ENCODE measurements at regions of chr16 and their contacts with region 1.

Region 1: GRCh38 chr16:22898874-22899348 is 84.9 kb downstream of the HS3ST2 start:
- DNase-seq: peak; percentile 33 to 73
- ATAC-seq: peak; percentile 73 to 83
- H3K4me3 ChIP-seq: no peak overlapping the region
- H3K27ac ChIP-seq: no peak overlapping the region
- H3K4me1 ChIP-seq: no peaks in the 10 kb centered on the region
- CTCF ChIP-seq: peak; percentile 71
- EP300 ChIP-seq: no peak
- POLR2A ChIP-seq: no peak
- RAD21 ChIP-seq: peak; percentile 69 to 84

Region 2: DNA sequence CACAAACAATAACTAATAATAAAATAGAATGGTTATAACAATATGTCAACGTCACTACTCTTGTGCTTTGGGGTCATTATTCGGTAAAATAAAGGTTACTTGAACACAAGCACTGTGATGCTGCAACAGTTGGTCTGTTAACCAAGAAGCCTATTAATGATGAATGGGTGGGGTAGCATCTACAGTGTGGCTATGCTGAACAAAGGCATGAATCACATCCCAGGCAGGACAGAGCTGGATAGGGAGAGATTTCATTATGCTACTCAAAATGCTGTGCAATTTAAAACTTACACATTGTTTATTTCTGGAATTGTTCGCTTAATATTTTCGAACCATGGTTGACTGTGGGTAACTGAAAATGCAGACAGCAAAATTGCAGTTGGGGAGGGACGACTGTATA is 94.0 kb before region 1 on chr16:
- CTCF ChIA-PET with region 1: no interaction called
- POLR2A ChIA-PET with region 1: no interaction called
- DNase-seq: no peak
- ATAC-seq: no peak
- H3K4me3 ChIP-seq: no peak overlapping the region
- H3K27ac ChIP-seq: no peak overlapping the region
- H3K4me1 ChIP-seq: no peaks in the 10 kb centered on the region
- CTCF ChIP-seq: no peak
- EP300 ChIP-seq: no peak
- POLR2A ChIP-seq: no peak
- RAD21 ChIP-seq: no peak

Region 3: GRCh38 chr16:22843856-22844255 is 55.1 kb before region 1 on chr16:
- CTCF ChIA-PET with region 1: no interaction called
- POLR2A ChIA-PET with region 1: no interaction called
- DNase-seq: no peak
- ATAC-seq: no peak
- H3K4me3 ChIP-seq: no peak overlapping the region
- H3K27ac ChIP-seq: no peak overlapping the region
- H3K4me1 ChIP-seq: no peaks in the 10 kb centered on the region
- CTCF ChIP-seq: no peak
- EP300 ChIP-seq: no peak
- POLR2A ChIP-seq: no peak
- RAD21 ChIP-seq: no peak

Region 4: DNA sequence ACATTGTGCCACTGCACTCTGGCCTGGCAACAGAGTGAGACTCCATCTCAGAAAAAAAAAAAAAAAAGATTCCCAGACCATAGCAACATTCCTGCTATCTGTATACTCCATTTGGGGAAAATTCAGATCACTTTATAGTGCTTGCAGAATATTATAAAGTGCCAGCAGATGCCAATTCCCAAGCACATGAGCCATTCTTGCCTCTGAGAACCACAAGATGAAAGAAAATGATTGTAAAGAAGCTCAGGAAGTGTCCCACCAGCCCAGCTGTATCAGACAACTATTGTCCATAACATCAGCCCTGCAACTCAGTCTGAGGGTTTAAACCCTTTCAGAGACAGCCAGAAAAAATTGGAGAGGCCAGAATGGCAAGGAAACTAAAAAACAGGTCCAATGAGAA is 15.9 kb before region 1 on chr16:
- CTCF ChIA-PET with region 1: interaction called, 19 read pairs
- POLR2A ChIA-PET with region 1: no interaction called
- DNase-seq: no peak
- ATAC-seq: no peak
- H3K4me3 ChIP-seq: no peak overlapping the region
- H3K27ac ChIP-seq: no peak overlapping the region
- H3K4me1 ChIP-seq: no peaks in the 10 kb centered on the region
- CTCF ChIP-seq: no peak
- EP300 ChIP-seq: no peak
- POLR2A ChIP-seq: no peak
- RAD21 ChIP-seq: no peak

Region 5: GRCh38 chr16:22912654-22913053 is 13.7 kb after region 1 on chr16:
- CTCF ChIA-PET with region 1: interaction called, 10 read pairs
- POLR2A ChIA-PET with region 1: no interaction called
- DNase-seq: no peak
- ATAC-seq: no peak
- H3K4me3 ChIP-seq: no peak overlapping the region
- H3K27ac ChIP-seq: no peak overlapping the region
- H3K4me1 ChIP-seq: no peaks in the 10 kb centered on the region
- CTCF ChIP-seq: no peak
- EP300 ChIP-seq: no peak
- POLR2A ChIP-seq: no peak
- RAD21 ChIP-seq: no peak

Region 6: GRCh38 chr16:23060458-23061320 is 161.8 kb after region 1 on chr16:
- CTCF ChIA-PET with region 1: interaction called, 16 read pairs
- POLR2A ChIA-PET with region 1: no interaction called
- DNase-seq: peak; percentile 73 to 78
- ATAC-seq: peak; percentile 89 to 93
- H3K4me3 ChIP-seq: no peak overlapping the region
- H3K27ac ChIP-seq: no peak overlapping the region
- H3K4me1 ChIP-seq: peaks cover 7% of the 10 kb centered on the region; the same call in 2 of the 3 replicates
- CTCF ChIP-seq: peak; percentile 78
- EP300 ChIP-seq: no peak
- POLR2A ChIP-seq: no peak
- RAD21 ChIP-seq: peak; percentile 74 to 77

Region 7: GRCh38 chr16:23156946-23157460 is 258.1 kb after region 1 on chr16:
- CTCF ChIA-PET with region 1: no interaction called
- POLR2A ChIA-PET with region 1: no interaction called
- DNase-seq: no peak
- ATAC-seq: no peak
- H3K4me3 ChIP-seq: no peak overlapping the region
- H3K27ac ChIP-seq: no peak overlapping the region
- H3K4me1 ChIP-seq: no peaks in the 10 kb centered on the region
- CTCF ChIP-seq: no peak
- EP300 ChIP-seq: no peak
- POLR2A ChIP-seq: no peak
- RAD21 ChIP-seq: no peak